Endothelial cell of umbilical vein (primary cell): ENCODE measurements at regions of chr2 and their contacts with region 1.

Region 1: DNA sequence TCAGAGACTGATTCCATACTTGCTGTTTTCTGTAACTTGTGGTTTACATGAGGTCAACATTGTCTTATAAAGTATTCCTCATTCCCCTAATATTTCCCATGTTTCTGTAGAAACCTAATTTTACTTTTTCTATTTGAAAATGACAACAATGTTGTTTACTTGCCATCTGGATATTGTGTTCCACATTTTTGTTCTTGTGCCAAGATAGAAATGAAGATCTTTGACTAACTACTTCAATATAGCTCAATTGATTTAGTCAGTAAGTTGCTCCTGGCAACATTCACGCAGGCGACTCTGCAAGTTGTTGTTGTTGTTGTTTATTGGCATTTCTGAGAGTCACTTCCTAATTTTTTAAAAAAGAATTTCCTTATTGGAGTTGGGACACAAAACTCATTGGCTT is 69.5 kb downstream of the CAVIN2 start:
- DNase-seq: no peak
- H3K4me3 ChIP-seq: no peak overlapping the region
- H3K27ac ChIP-seq: no peak overlapping the region
- H3K4me1 ChIP-seq: no peaks in the 10 kb centered on the region
- H3K27me3 ChIP-seq: peaks cover 0 to 3% of the 10 kb centered on the region in 2 experiments
- CTCF ChIP-seq: no peak
- POLR2A ChIP-seq: no peak

Region 2: DNA sequence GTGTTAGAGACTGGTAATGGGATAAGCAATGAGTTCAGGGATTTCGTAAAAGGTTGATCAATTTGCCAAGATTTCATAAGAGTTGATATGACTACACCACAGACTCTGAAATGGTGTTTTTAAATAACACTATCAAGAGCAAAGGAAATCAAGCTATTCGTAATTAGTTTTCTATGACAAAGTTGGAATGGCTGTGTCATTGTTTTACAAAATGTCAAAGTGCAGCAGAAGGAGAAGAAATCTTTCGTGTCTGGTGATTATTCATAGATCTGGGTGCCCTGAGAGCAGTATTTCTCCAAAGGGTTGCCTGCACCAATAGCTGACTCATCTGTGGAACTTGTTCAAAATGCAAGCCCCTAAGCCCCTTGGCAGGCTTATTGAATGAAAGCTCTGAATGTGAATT is 29.3 kb before region 1 on chr2:
- CTCF ChIA-PET with region 1: no interaction called
- POLR2A ChIA-PET with region 1: no interaction called
- dilution Hi-C with region 1: no loop called
- intact Hi-C with region 1: loop called (anchors 2 kb)
- DNase-seq: no peak
- H3K4me3 ChIP-seq: no peak overlapping the region
- H3K27ac ChIP-seq: no peak overlapping the region
- H3K4me1 ChIP-seq: no peaks in the 10 kb centered on the region
- H3K27me3 ChIP-seq: peaks cover 0 to 2% of the 10 kb centered on the region in 2 experiments
- CTCF ChIP-seq: no peak
- POLR2A ChIP-seq: no peak

Region 3: GRCh38 chr2:191806396-191806795 is 29.0 kb after region 1 on chr2:
- CTCF ChIA-PET with region 1: no interaction called
- POLR2A ChIA-PET with region 1: no interaction called
- dilution Hi-C with region 1: no loop called
- intact Hi-C with region 1: no loop called
- DNase-seq: no peak
- H3K4me3 ChIP-seq: no peak overlapping the region
- H3K27ac ChIP-seq: no peak overlapping the region
- H3K4me1 ChIP-seq: no peaks in the 10 kb centered on the region
- H3K27me3 ChIP-seq: no peaks in the 10 kb centered on the region
- CTCF ChIP-seq: no peak
- POLR2A ChIP-seq: no peak

Region 4: DNA sequence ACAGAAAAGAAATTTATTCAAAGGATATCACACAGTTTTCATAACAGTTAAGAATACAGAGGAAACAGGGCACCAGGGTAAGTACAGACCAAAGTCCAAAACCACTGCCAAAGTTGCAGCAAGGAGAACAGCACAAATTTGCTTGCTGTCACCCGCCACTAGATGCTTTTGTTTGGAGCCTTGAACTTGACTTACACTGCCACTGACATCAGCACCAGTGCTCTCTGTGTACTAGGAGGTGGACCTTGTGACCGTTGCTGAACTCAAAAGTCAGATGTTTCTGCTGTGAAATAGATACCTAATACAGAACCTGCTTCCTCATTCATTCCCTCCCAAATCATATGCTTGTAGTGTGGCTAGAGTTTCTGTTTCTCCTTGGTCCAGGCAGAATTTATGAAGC is 995.7 kb after region 1 on chr2:
- CTCF ChIA-PET with region 1: no interaction called
- POLR2A ChIA-PET with region 1: no interaction called
- dilution Hi-C with region 1: no loop called
- intact Hi-C with region 1: no loop called
- DNase-seq: no peak
- H3K4me3 ChIP-seq: no peak overlapping the region
- H3K27ac ChIP-seq: no peak overlapping the region
- H3K4me1 ChIP-seq: no peaks in the 10 kb centered on the region
- H3K27me3 ChIP-seq: no peaks in the 10 kb centered on the region
- CTCF ChIP-seq: no peak
- POLR2A ChIP-seq: no peak